T-cell (primary cell): ENCODE measurements at regions of chr19 and their contacts with region 1.

Region 1: DNA sequence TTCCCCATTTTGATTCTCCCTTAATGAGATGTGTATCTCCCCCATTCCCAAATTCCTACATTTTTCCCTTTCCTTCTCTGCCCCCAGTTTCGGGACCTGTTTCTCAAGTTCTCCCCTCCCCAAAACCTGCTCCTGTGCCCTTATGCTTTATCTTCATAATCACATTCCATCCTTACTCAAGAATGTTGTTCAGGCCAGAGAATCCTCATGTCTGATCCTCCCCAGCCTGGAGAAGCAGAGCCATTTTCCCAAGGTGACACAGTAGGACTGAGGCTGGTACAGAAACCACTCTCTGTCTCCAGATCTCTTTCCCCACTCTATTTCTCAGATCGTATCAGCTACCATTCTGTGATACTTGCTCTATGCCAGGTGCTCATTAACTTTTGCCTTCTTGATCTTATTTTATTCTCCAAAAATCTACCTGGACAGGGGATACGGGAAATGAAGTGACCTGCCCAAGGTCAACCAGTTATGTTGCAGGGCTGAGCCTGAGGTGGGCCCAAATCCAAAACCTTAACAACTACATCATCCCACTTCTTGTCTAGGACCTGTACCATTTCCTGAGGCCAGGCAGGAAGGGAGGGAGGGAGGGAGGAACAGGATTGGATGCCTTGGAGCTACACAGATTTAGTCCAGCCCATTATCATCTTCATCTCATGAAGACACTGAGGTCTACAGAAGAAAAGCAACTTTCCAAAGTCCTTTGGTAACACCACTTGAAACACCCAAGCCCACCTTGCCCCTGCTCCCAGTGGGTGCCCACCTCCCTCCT is 10.6 kb downstream of the SMG9 start:
- DNase-seq: no peak
- ATAC-seq: no peak
- H3K4me3 ChIP-seq: no peak overlapping the region
- H3K4me3 Mint-ChIP-seq: no peak overlapping the region
- H3K27ac ChIP-seq: no peak overlapping the region
- H3K27ac Mint-ChIP-seq: no peak overlapping the region
- H3K4me1 ChIP-seq: peaks cover 0 to 21% of the 10 kb centered on the region in 2 experiments
- H3K4me1 Mint-ChIP-seq: peaks cover 12 to 29% (median 19%) of the 10 kb centered on the region in 3 donors
- H3K27me3 ChIP-seq: no peaks in the 10 kb centered on the region
- H3K27me3 Mint-ChIP-seq: no peaks in the 10 kb centered on the region

Region 2: DNA sequence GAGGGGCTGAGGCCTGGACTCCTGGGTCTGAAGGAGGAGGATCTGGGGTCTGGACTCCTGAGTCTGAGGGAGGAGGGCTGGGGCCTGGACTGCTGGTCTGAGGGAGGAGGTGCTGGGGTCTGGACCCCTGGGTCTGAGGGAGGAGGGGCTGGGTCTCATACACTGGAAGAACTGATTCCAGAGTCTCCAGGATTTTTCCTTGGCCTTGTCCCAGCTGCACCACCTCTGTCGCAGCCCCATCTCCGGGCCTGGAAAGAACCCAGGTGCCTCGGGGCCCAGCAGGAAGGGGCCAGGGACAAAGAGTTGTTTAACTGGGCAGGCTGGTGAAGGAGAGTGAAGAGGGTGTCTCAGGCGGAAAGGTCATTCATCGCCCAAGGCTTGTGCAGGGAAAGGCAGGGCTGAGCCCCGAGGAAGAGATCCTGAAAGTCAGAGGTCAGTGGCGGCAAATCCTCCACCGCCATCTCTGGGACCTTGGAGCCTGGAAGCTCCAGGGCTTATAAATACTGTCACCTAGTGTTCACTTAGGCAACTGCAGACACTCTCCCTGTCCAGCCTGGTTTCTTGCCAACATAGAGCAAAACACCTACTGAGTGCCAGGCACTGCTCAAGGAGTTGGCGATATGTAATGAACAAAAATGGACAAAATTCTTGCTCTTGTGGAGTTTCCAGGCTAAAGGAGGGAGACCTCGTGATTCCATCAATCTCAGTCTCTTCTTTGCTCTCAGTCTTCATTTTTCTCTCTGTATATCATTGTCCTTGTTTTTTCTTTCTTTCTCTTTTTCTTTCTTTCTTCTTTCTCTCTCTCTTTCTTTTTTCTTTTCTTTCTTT is 41.0 kb after region 1 on chr19:
- CTCF ChIA-PET with region 1: interaction called in 1 of 2 experiments, 16 read pairs
- POLR2A ChIA-PET with region 1: no interaction called
- DNase-seq: peak in 25 of 35 experiments; percentile 15 to 82 (median 35)
- ATAC-seq: peak; percentile 34 to 61 (median 40)
- H3K4me3 ChIP-seq: no peak overlapping the region
- H3K4me3 Mint-ChIP-seq: peak overlapping the region; percentile 51 to 83 (median 65)
- H3K27ac ChIP-seq: peak overlapping the region; percentile 71
- H3K27ac Mint-ChIP-seq: peak overlapping the region; percentile 97 to 98
- H3K4me1 ChIP-seq: peaks cover 13 to 51% of the 10 kb centered on the region in 2 experiments
- H3K4me1 Mint-ChIP-seq: peaks cover 43 to 46% (median 43%) of the 10 kb centered on the region in 3 donors
- H3K27me3 ChIP-seq: peaks cover 0 to 3% of the 10 kb centered on the region in 2 experiments
- H3K27me3 Mint-ChIP-seq: peaks cover 5% of the 10 kb centered on the region in 2 donors

Region 3: GRCh38 chr19:43809762-43810696 is 65.9 kb after region 1 on chr19:
- CTCF ChIA-PET with region 1: interaction called, 5 to 26 read pairs
- POLR2A ChIA-PET with region 1: no interaction called
- DNase-seq: peak in 1 of 35 experiments; percentile 72
- ATAC-seq: peak; percentile 45 to 65 (median 60)
- H3K4me3 ChIP-seq: no peak overlapping the region
- H3K4me3 Mint-ChIP-seq: no peak overlapping the region
- H3K27ac ChIP-seq: no peak overlapping the region
- H3K27ac Mint-ChIP-seq: no peak overlapping the region
- H3K4me1 ChIP-seq: no peaks in the 10 kb centered on the region
- H3K4me1 Mint-ChIP-seq: peaks cover 0 to 7% (median 0%) of the 10 kb centered on the region in 3 donors
- H3K27me3 ChIP-seq: peaks cover 0 to 9% of the 10 kb centered on the region in 2 experiments
- H3K27me3 Mint-ChIP-seq: peaks cover 9 to 14% of the 10 kb centered on the region in 2 donors

Region 4: GRCh38 chr19:43826787-43827754 is 82.9 kb after region 1 on chr19 and contains the start of gene ZNF283:
- CTCF ChIA-PET with region 1: no interaction called
- POLR2A ChIA-PET with region 1: no interaction called
- DNase-seq: peak; percentile 54 to 85 (median 68)
- ATAC-seq: peak; percentile 94 to 99 (median 96)
- H3K4me3 ChIP-seq: peak within 1 kb of the TSS; percentile 73 to 86
- H3K4me3 Mint-ChIP-seq: peak within 1 kb of the TSS; percentile 88 to 90 (median 89)
- H3K27ac ChIP-seq: no peak within 1 kb of the TSS
- H3K27ac Mint-ChIP-seq: peak within 1 kb of the TSS; percentile 52 to 72
- H3K4me1 ChIP-seq: peaks cover 2 to 12% of the 10 kb centered on the region in 2 experiments
- H3K4me1 Mint-ChIP-seq: peaks cover 19 to 21% (median 19%) of the 10 kb centered on the region in 3 donors
- H3K27me3 ChIP-seq: peaks cover under 1 to 6% of the 10 kb centered on the region in 2 experiments
- H3K27me3 Mint-ChIP-seq: peaks cover 0 to 7% of the 10 kb centered on the region in 2 donors
- total RNA-seq, gene ZNF283: 5.4 to 19.0 (median 12.7) TPM